HEK293T (cell line): ENCODE measurements at regions of chr1 and their contacts with region 1.

Region 1: DNA sequence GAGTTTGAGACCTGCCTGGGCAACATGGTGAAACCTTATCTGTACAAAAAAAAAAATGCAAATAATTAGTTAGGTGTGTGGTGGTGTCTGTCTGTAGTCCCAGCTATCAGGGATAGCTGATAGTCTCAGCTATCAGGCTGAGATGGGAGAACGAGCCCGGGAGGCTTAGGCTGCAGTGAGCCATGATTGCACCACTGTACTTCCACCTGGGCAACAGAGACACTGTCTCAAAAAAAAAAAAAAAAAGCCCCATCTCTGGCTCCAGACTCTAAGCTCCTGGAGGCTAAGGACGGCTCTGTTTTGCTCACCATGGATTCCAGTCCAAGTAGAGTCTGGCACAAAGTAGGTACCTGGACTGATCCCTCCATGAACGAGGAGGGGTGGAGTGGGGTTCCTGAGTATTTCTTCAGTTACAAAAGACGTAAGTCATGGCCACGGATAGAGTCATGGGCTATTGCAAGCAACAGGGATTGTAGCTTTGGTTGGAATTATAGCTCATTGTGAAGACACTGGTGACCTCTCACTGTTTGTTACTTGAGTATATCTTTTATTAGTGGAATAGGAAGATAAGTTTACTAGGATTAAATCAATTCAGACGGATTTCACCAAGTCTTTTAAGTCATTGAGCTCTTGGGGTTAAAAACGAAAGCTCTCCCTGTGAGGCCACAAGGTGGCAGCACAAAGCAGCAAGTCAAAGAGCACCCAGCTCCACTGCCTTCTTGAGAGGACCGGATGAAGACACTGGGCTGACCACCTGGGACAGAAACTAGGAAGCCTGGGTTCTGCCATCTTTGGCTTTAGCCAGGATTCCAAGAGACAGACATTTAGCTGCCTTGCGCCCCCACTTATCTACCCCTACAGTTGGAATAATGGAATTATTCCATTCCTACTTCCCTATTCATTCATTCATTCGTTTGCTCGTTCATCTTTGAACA is 35.6 kb upstream of the TMEM61 start:
- DNase-seq: peak; percentile 91

Region 2: DNA sequence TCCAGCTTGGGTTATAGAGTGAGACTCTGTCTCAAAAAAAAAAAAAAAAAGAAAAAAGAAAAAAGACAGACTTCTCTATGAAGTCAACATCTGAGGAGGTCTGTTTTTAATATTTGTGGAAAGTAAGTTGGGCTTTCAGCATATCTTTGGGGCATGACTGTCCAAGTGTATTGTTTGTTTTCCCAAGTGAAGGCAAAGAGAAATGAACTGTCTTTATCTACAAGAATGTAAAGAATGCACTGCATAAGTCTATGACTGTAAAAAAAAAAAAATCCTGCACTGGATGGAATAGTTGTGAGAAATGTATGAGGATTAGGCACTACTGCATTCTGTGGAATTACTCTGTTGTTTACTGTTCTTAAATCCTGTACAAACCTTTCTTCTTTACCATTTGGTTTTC is 10.0 kb before region 1 on chr1:
- CTCF ChIA-PET with region 1: interaction called, 10 read pairs
- POLR2A ChIA-PET with region 1: no interaction called
- DNase-seq: no peak

Region 3: DNA sequence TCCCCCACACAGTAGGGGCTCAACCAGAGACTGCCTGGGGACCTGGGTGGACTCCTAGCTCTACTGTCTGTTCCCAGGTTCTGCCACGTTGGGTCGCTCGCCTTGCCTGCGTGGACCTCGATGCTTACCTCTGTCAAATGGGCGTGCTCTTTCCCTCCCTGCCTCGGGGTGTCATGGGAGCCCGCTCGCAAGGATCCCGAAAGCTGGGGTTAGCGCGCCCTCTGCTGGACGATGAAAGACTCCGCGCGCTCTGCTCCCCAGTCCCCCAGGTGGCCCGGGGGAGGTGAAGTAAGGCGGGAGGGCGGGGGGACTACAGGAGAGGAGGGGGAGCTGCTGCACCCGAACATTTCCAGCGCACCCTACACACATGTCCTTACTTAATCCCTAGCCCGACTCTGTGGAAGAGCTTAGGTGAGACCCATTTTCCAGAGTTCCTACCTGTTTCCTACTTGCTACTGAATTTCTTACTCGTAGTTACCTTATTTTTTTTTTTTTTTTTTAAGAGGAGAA is 51.5 kb after region 1 on chr1:
- CTCF ChIA-PET with region 1: interaction called, 45 read pairs
- POLR2A ChIA-PET with region 1: no interaction called
- DNase-seq: peak; percentile 97

Region 4: DNA sequence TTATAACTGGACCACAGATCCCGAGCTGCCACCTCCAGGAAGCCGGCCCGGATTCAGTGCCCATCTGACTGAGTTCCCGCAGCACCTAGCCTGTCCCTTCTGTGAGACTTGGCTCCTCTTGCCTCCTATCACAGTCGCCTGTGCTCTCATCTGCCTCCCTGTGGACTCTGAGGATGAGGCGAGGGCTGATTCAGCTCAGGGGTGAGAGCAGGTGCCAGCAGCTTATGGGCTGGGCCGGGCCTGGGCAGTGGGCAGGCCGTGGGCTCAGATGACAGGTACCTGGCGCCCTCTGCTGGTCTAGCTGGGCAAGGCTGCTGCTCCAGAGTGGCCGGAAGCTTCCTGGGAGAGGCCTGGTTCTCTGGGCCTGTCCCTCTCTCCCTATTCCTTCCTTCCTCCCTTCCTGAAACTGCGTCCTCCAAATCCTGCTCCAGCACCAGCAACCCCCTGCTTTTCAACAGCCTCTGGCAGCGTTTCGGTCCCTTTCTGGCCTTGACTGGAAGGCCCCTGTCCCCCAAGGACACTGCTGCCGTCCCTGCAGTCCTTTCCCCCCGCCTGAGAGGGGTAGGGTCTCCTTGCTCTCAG is 77.2 kb after region 1 on chr1:
- CTCF ChIA-PET with region 1: interaction called, 39 read pairs
- POLR2A ChIA-PET with region 1: interaction called, 6 read pairs
- DNase-seq: peak; percentile 98

Region 5: DNA sequence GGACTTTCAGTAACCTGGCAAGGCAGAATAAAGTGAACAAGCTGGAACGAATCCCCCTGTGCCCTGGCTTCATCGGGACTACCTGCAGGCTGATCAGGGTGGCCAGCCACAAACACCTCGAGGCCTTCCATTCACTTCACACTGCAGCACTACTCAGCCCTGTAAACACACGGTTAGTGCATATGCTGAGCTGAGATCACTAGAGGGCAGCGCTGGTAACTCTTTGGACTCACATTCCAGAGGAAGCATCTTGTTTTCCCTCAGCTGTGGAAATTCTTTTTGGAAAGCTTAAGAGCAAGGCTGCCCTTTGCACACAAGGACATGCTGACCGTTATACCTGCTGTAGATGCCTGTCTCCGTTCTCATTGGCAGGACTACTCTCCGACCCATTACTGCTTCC is 126.6 kb after region 1 on chr1:
- CTCF ChIA-PET with region 1: interaction called, 12 read pairs
- POLR2A ChIA-PET with region 1: no interaction called
- DNase-seq: peak; percentile 76